ENCODE measurements at regions of chr6 and their contacts with region 1.

Region 1: GRCh38 chr6:96194675-96195074 is 178.9 kb downstream of the FUT9 start:
- DNase-seq: no peak
- H3K4me3 Mint-ChIP-seq: no peak overlapping the region
- H3K27ac Mint-ChIP-seq: peak overlapping the region; percentile 23
- H3K4me1 Mint-ChIP-seq: peaks cover 20% of the 10 kb centered on the region
- H3K27me3 Mint-ChIP-seq: no peaks in the 10 kb centered on the region
- CTCF ChIP-seq: no peak

Region 2: GRCh38 chr6:95991906-95992305 is 202.8 kb before region 1 on chr6:
- CTCF ChIA-PET with region 1: no interaction called
- intact Hi-C with region 1: no loop called
- DNase-seq: no peak
- H3K4me3 Mint-ChIP-seq: no peak overlapping the region
- H3K27ac Mint-ChIP-seq: no peak overlapping the region
- H3K4me1 Mint-ChIP-seq: no peaks in the 10 kb centered on the region
- H3K27me3 Mint-ChIP-seq: no peaks in the 10 kb centered on the region
- CTCF ChIP-seq: no peak

Region 3: GRCh38 chr6:96304997-96305396 is 110.3 kb after region 1 on chr6:
- CTCF ChIA-PET with region 1: no interaction called
- intact Hi-C with region 1: loop called (anchors 5 kb)
- DNase-seq: no peak
- H3K4me3 Mint-ChIP-seq: peak overlapping the region; percentile 3
- H3K27ac Mint-ChIP-seq: peak overlapping the region; percentile 33
- H3K4me1 Mint-ChIP-seq: peaks cover 30% of the 10 kb centered on the region
- H3K27me3 Mint-ChIP-seq: no peaks in the 10 kb centered on the region
- CTCF ChIP-seq: no peak

Measured in Calu3 (cell line).